OCI-LY7 (cell line): ENCODE measurements at regions of chr6 and their contacts with region 1.

Region 1: DNA sequence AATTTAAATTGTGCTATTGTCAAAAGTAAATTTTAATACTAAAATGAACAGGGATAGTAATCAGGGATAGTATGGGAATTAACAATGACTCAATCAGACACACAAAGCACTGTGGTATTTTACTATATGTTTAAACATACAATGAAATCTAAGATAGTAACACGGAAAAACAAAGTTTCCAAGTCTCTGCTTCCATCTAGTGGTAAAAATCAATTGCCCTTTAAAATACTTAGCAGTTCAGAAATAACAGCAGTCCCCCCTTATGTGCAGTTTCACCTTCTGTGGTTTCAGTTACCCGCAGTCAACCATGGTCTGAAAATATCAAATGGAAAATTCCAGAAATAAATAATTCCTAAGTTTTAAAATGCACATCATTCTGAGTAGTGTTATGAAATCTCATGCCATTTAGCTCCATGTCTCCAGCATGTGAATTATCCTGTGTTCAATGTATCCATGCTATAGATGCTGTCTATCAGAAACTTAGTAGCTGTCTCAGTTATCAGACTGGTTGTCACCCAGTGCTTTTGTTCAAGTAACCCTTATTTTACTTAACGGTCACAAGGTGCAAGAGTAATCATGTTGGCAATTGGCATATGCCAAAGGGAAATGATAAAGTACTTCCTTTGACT is 58.5 kb downstream of the AHI1 start:
- DNase-seq: peak; percentile 73
- H3K4me3 ChIP-seq: no peak overlapping the region
- H3K27ac ChIP-seq: no peak overlapping the region
- H3K4me1 ChIP-seq: peaks cover 25% of the 10 kb centered on the region
- CTCF ChIP-seq: peak; percentile 95

Region 2: GRCh38 chr6:134995536-134995935 is 443.5 kb before region 1 on chr6:
- CTCF ChIA-PET with region 1: no interaction called
- POLR2A ChIA-PET with region 1: no interaction called
- intact Hi-C with region 1: loop called (anchors 10 kb)
- DNase-seq: no peak
- H3K4me3 ChIP-seq: no peak overlapping the region
- H3K27ac ChIP-seq: no peak overlapping the region
- H3K4me1 ChIP-seq: no peaks in the 10 kb centered on the region
- CTCF ChIP-seq: no peak

Region 3: DNA sequence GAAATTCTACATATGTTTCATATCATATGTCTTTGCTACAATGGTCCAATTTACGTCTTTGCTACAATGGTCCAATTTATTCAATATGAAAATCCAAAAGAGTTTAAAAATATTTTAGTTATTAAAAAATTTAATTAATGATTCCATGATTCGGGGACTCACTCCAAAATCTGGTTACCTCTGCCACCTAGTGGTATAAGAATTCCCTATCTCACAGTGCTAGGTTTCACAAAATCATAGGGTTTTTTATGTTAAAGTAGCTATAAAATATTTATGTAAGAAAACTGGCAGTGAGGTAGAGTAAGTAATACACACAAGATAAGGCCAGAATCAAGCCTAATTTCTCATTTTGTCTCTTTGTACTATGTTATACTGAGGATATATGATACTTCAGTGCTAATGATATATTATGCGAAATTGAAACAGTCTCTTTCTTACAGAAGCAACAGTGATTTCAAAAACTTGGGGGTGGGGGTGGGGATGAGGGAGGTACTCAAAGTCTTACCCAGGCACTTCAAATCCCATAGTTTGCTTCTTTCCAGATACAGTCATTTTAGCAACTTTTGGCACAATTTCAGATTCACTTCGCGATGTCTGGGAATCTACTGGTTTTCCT is 436.7 kb before region 1 on chr6:
- CTCF ChIA-PET with region 1: no interaction called
- POLR2A ChIA-PET with region 1: interaction called, 10 read pairs
- intact Hi-C with region 1: loop called (anchors 10 kb)
- DNase-seq: peak; percentile 38
- H3K4me3 ChIP-seq: no peak overlapping the region
- H3K27ac ChIP-seq: no peak overlapping the region
- H3K4me1 ChIP-seq: peaks cover 6% of the 10 kb centered on the region
- CTCF ChIP-seq: peak; percentile 91

Region 4: GRCh38 chr6:135397172-135397952 is 41.7 kb before region 1 on chr6:
- CTCF ChIA-PET with region 1: no interaction called
- POLR2A ChIA-PET with region 1: no interaction called
- intact Hi-C with region 1: no loop called
- DNase-seq: no peak
- H3K4me3 ChIP-seq: no peak overlapping the region
- H3K27ac ChIP-seq: no peak overlapping the region
- H3K4me1 ChIP-seq: peaks cover 6% of the 10 kb centered on the region
- CTCF ChIP-seq: no peak